Activated T-helper 2 cell treated with anti-CD3 and anti-CD28 coated beads, Interferon-gamma antibody, Interleukin-2, Interleukin-4, amounts not matched to agents 10 μg/mL and 5 μg/mL and 100 μg/mL, durations not matched to agents 14 hours and 24 hours and 36 hours (primary cell): ENCODE measurements at regions of chr7 and their contacts with region 1.

Region 1: DNA sequence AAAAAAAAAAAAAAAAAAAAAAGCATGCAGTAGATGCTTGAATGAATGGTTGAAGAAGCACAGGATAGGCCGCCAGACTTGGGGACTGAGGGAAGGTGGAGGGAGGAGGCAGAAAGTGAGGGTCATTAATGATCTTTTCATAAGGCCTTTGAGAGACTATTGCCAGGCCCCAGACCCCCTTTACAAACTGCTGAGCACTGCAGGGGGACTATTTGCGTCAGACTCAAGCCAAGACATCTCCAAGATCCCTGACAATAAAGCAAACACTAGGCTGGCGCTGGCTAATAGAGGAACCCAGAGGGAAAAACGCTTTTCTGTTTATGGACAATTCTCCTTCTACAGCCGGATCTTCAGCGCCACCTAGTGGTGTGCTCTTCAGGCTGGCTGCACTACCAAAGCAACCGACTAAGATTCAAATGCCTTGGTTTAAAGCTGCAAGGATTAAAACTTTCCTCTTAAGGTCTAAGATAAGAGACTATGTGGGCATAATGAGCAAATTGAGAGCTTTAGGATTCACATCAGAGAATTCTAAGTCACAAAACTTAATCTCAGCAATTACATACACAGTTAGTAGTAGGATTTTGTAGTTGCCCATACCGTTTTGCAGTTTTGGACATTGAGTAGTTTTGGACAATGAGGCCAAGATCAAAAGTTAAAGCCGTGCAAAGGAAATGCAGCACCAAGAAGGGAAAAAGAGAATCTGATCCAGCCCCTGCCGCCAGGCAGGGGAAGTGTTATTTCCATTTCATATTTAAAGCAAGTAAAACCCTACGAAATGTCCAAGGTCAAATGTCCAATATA is 17.9 kb upstream of the AGK start:
- DNase-seq: no peak
- H3K4me3 Mint-ChIP-seq: no peak overlapping the region
- H3K27ac Mint-ChIP-seq: no peak overlapping the region
- H3K4me1 Mint-ChIP-seq: peaks cover 3% of the 10 kb centered on the region
- H3K27me3 Mint-ChIP-seq: peaks cover 32% of the 10 kb centered on the region

Region 2: GRCh38 chr7:140810830-140811556 is 722.4 kb before region 1 on chr7:
- intact Hi-C with region 1: loop called (anchors 5 kb)
- DNase-seq: peak; percentile 34
- H3K4me3 Mint-ChIP-seq: no peak overlapping the region
- H3K27ac Mint-ChIP-seq: no peak overlapping the region
- H3K4me1 Mint-ChIP-seq: peaks cover 1% of the 10 kb centered on the region
- H3K27me3 Mint-ChIP-seq: no peaks in the 10 kb centered on the region

Region 3: GRCh38 chr7:141014524-141015395 is 518.6 kb before region 1 on chr7 and contains the start of gene MRPS33:
- intact Hi-C with region 1: no loop called
- DNase-seq: peak; percentile 93
- H3K4me3 Mint-ChIP-seq: peak within 1 kb of the TSS; percentile 97
- H3K27ac Mint-ChIP-seq: peak within 1 kb of the TSS; percentile 100
- H3K4me1 Mint-ChIP-seq: peaks cover 31% of the 10 kb centered on the region
- H3K27me3 Mint-ChIP-seq: peaks cover 21% of the 10 kb centered on the region
- total RNA-seq, gene MRPS33: 67.4 and 70.0 TPM in 2 replicates

Region 4: DNA sequence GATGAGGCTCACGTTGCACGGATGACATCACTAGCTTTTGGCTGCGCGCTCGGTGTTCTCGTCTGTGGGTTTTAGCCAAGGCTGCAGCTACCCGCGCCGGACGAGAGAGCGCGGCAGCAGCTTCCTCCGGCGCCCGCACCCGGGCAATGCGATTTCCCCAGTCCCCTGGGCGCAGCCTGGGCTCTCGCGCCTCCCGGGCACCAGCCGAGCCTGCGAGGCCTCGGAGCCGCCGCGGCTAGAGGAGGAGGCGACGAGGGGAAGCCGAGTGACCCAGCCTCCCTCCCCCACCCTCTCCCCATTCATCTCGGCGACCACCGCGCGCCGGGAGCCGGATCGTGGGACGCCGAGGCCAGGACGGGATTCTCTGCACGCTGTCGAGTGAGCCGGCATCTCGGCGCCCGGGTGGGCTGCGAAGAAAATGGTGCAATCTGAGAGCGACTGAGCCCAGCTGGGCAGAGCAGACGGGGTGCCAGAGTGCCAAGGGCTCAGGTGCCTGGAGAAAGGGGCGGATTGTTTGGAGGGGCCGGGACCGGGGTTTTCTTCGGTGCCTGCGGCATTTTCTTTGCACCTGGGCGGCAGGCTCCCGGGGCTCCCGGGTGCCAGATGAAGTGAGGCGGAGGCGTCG is 460.7 kb before region 1 on chr7:
- intact Hi-C with region 1: loop called (anchors 5 kb)
- DNase-seq: peak; percentile 21
- H3K4me3 Mint-ChIP-seq: peak overlapping the region; percentile 61
- H3K27ac Mint-ChIP-seq: no peak overlapping the region
- H3K4me1 Mint-ChIP-seq: peaks cover 13% of the 10 kb centered on the region
- H3K27me3 Mint-ChIP-seq: peaks cover 48% of the 10 kb centered on the region